Ascending aorta (tissue), 2 donors: ENCODE measurements at regions of chr3 and their contacts with region 1.

Region 1: DNA sequence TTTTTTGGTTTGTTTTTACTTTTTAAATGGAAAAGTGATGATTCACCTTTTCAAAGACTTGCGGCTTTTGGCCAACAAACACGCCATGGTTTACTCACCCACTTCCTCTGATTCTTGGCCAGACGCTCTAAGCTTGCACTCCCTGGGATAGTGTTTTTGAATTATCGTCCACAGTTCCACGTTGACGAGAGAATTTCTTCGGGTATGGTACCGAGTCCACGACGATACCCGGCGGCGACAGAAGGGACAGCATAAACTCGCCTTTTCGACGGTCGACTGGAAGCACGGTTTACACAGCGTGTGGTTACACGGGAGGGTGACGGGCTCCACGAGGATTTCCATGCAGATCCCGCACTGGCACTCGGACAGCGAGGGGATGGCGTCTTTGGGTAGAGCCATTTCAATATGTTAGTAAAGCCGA is 783 bp downstream of the RNF168 start:
- DNase-seq: peak in 1 of 2 donors; percentile 81
- H3K4me3 ChIP-seq: peak overlapping the region; percentile 76 to 90
- H3K27ac ChIP-seq: peak overlapping the region; percentile 94 to 97
- H3K4me1 ChIP-seq: peaks cover 3 to 10% of the 10 kb centered on the region in 2 donors
- H3K27me3 ChIP-seq: no peaks in the 10 kb centered on the region
- CTCF ChIP-seq: no peak

Region 2: GRCh38 chr3:195542698-195543499 is 959.9 kb before region 1 on chr3 and contains the start of gene PPP1R2:
- intact Hi-C with region 1: loop called (anchors 5 kb)
- DNase-seq: peak; percentile 51 to 95
- H3K4me3 ChIP-seq: peak within 1 kb of the TSS; percentile 78 to 83
- H3K27ac ChIP-seq: peak within 1 kb of the TSS; percentile 87 to 93
- H3K4me1 ChIP-seq: peaks cover 21 to 48% of the 10 kb centered on the region in 2 donors
- H3K27me3 ChIP-seq: no peaks in the 10 kb centered on the region
- CTCF ChIP-seq: no peak
- total RNA-seq, gene PPP1R2: 62.3 TPM

Region 3: DNA sequence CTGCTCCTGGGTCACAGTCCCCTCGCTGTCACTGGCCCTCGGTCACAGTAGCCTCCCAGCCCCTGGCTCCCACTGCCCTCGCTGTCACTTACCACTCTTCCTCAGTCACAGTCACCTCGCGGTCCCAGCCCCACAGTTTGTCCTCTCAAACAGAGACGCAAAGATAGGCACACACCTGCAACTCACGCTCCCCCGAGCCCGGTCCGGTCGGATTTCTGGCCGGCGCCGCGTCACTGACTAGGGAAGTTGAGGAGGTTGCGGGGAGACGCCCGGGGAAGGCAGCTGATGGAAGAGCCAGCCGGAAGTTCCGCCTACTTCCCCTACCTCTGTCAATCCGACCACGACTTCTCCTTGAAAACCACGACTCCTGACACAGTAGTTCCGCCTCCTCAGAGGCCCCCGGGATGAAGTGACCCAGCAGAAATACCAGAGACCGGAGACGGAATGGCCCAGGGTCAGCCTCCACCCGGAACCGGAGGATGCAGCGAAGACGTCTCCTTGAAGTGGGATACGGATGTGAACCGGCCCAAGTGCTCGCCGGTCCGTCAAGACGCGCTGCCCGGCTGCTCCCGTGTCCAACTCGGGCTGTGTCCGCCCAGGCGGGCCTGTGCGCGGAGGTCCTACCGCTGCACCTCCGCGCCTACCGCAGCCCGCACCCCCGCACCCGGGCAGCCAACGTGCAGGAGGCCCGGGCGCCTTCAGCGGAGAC is 215.2 kb before region 1 on chr3 and contains the start of gene PCYT1A:
- intact Hi-C with region 1: loop called (anchors 2 kb)
- DNase-seq: peak; percentile 77 to 96
- H3K4me3 ChIP-seq: peak within 1 kb of the TSS; percentile 75 to 78
- H3K27ac ChIP-seq: peak within 1 kb of the TSS; percentile 82 to 92
- H3K4me1 ChIP-seq: peaks cover 0 to 30% of the 10 kb centered on the region in 2 donors
- H3K27me3 ChIP-seq: no peaks in the 10 kb centered on the region
- CTCF ChIP-seq: no peak
- total RNA-seq, gene PCYT1A: 30.7 TPM

Region 4: GRCh38 chr3:196323701-196324100 is 179.1 kb before region 1 on chr3:
- intact Hi-C with region 1: no loop called
- DNase-seq: no peak
- H3K4me3 ChIP-seq: no peak overlapping the region
- H3K27ac ChIP-seq: no peak overlapping the region
- H3K4me1 ChIP-seq: no peaks in the 10 kb centered on the region
- H3K27me3 ChIP-seq: no peaks in the 10 kb centered on the region
- CTCF ChIP-seq: no peak

Region 5: GRCh38 chr3:196432137-196432879 is 70.5 kb before region 1 on chr3 and contains the start of gene UBXN7:
- intact Hi-C with region 1: loop called (anchors 1 kb)
- DNase-seq: peak; percentile 71 to 96
- H3K4me3 ChIP-seq: peak within 1 kb of the TSS; percentile 87 to 96
- H3K27ac ChIP-seq: peak within 1 kb of the TSS; percentile 87 to 96
- H3K4me1 ChIP-seq: peaks cover 0 to 6% of the 10 kb centered on the region in 2 donors
- H3K27me3 ChIP-seq: no peaks in the 10 kb centered on the region
- CTCF ChIP-seq: peak in 1 of 3 experiments; percentile 2
- total RNA-seq, gene UBXN7: 7.2 TPM

Region 6: GRCh38 chr3:196711838-196712513 is 209.2 kb after region 1 on chr3 and contains the starts of genes CEP19 and PIGX:
- intact Hi-C with region 1: loop called (anchors 2 kb)
- DNase-seq: peak; percentile 27 to 90
- H3K4me3 ChIP-seq: peak within 1 kb of the TSS; percentile 85 to 87
- H3K27ac ChIP-seq: peak within 1 kb of the TSS; percentile 86 to 91
- H3K4me1 ChIP-seq: peaks cover 0 to 8% of the 10 kb centered on the region in 2 donors
- H3K27me3 ChIP-seq: no peaks in the 10 kb centered on the region
- CTCF ChIP-seq: no peak
- total RNA-seq, gene CEP19: 2.6 TPM
- total RNA-seq, gene PIGX: 47.7 TPM

Region 7: DNA sequence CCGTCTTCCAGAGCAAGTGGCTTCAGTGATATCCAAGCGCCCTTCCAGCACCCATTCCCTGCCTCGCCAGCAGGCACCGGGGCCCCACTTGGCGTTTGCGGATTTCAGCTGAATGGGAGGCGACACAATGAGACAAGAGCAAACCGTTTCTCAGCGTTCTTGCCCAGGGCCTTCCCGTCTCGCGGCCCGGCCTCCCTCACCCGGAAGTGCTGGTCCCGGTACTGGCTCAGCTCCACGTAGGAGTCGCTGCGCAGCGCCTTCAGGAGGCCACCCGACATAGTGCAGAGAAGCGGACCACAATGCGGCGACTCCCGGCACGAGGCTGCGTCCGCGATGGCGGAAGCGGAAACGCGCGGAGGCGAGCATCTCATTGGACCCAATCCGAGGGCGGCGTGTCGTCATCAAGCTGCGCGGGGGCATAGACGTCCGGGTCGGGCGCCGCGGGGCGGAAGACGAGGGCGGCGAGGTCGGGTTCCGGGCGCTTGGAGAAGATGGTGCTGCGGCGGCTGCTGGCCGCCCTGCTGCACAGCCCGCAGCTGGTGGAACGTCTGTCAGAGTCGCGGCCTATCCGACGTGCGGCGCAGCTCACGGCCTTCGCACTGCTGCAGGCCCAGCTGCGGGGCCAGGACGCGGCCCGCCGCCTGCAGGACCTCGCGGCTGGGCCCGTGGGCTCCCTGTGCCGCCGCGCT is 439.6 kb after region 1 on chr3 and contains the start of gene NCBP2:
- intact Hi-C with region 1: loop called (anchors 2 kb)
- DNase-seq: peak; percentile 95 to 99
- H3K4me3 ChIP-seq: peak within 1 kb of the TSS; percentile 93 to 100
- H3K27ac ChIP-seq: peak within 1 kb of the TSS; percentile 88 to 96
- H3K4me1 ChIP-seq: peaks cover 14 to 17% of the 10 kb centered on the region in 2 donors
- H3K27me3 ChIP-seq: no peaks in the 10 kb centered on the region
- CTCF ChIP-seq: peak; percentile 56 to 68 (median 61)
- total RNA-seq, gene NCBP2: 16.9 TPM